IMR-90 (cell line): ENCODE measurements at regions of chr2 and their contacts with region 1.

Region 1: GRCh38 chr2:215931256-215931903 is 82.0 kb downstream of the MREG start:
- DNase-seq: peak; percentile 83
- ATAC-seq: peak; percentile 94
- H3K4me3 ChIP-seq: no peak overlapping the region
- H3K27ac ChIP-seq: no peak overlapping the region
- H3K4me1 ChIP-seq: peaks cover 8% of the 10 kb centered on the region
- H3K27me3 ChIP-seq: no peaks in the 10 kb centered on the region
- CTCF ChIP-seq: peak; percentile 97
- POLR2A ChIP-seq: peak; percentile 59; the same call in 1 of the 2 replicates
- RAD21 ChIP-seq: peak; percentile 98

Region 2: DNA sequence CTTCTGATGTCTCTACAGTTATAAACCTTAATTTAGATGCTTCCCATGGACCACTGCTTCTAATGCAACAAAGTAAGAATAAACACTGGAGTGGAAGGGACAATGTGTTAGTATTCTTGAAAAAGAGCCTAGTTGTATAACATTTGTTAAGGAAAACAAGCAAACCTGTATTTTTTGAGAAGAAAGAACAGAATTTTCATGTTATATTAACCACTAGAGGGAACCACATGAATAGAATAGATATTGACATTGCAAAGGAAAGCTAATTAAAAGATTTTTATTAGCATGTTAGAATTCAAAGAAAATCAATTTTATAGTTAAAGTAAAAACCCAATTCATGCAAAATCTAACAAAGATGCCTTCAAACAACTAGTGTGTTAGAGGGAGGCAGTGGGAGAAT is 970.7 kb before region 1 on chr2:
- CTCF ChIA-PET with region 1: interaction called, 7 read pairs
- POLR2A ChIA-PET with region 1: no interaction called
- dilution Hi-C with region 1: no loop called
- in situ Hi-C with region 1: loop called (anchors 10 kb)
- intact Hi-C with region 1: loop called (anchors 2 kb)
- DNase-seq: peak; percentile 1
- ATAC-seq: no peak
- H3K4me3 ChIP-seq: no peak overlapping the region
- H3K27ac ChIP-seq: no peak overlapping the region
- H3K4me1 ChIP-seq: no peaks in the 10 kb centered on the region
- H3K27me3 ChIP-seq: no peaks in the 10 kb centered on the region; the same call in 1 of the 2 replicates
- CTCF ChIP-seq: peak; percentile 28; the same call in 1 of the 2 replicates
- POLR2A ChIP-seq: no peak
- RAD21 ChIP-seq: peak; percentile 39

Region 3: DNA sequence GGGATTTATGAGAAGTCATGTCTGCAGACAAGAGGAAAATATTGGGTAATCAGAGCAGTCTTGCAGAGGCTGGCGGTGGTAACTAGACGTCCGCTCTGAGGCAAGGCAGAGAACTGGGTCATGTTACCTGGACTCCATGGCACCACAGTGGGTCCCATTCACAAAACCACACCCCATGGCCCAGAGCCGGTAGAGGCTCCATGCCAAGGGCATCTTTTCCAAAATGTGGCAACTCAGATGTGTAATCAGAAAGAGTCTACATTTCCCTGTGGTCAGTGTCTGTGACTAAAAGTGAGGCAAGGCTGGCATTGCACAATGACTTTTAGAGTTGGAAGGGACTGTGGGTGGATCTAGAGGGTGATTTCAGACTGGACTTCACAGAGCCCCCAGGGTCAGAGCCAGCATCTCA is 31.2 kb before region 1 on chr2:
- CTCF ChIA-PET with region 1: no interaction called
- POLR2A ChIA-PET with region 1: no interaction called
- dilution Hi-C with region 1: no loop called
- in situ Hi-C with region 1: no loop called
- intact Hi-C with region 1: no loop called
- DNase-seq: peak; percentile 37
- ATAC-seq: no peak
- H3K4me3 ChIP-seq: no peak overlapping the region
- H3K27ac ChIP-seq: no peak overlapping the region
- H3K4me1 ChIP-seq: peaks cover 8% of the 10 kb centered on the region
- H3K27me3 ChIP-seq: no peaks in the 10 kb centered on the region
- CTCF ChIP-seq: no peak
- POLR2A ChIP-seq: no peak
- RAD21 ChIP-seq: no peak